Activated CD4-positive, alpha-beta memory T cell treated with anti-CD3 and anti-CD28 coated beads for 36 hours (primary cell): ENCODE measurements at regions of chr13 and their contacts with region 1.

Region 1: DNA sequence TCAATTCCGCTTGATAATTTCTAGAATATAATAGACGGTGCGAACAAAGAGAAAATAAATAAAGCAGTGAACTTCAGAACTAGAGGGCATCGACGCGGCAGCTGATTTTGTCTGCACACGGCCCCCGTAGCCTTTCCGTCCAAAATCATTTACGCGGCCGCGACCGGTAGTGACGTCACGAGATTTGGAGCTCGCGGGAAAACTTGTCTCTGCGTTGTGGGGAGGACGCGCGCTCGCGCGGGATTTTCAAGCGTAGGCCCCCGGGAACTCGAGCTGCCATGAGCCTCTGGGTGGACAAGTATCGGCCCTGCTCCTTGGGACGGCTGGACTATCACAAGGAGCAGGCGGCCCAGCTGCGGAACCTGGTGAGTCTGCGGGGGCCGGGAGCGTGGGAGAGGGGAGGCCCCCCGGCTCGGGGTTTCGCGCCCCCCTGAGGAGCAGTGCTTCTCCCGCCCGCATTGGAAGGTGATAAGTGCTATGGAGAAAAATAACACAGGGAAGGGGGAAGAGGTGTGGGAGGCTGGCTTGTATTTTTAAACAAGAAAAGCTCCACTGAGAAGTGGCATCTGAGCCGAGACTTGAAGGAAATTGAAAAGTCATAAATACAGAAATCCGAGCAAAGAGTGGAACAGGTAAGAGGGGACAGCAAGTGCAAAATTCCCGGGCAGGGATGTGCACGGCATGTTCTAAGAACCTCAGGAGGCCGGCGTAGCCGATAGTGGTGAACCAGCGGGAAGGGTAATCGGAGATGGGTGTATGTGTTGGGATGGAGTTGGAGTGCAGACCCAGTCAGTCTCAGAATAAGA is at the start of gene RFC3:
- DNase-seq: peak; percentile 96
- H3K4me3 Mint-ChIP-seq: peak within 1 kb of the TSS; percentile 99
- H3K27ac Mint-ChIP-seq: peak within 1 kb of the TSS; percentile 62
- H3K4me1 Mint-ChIP-seq: peaks cover 34% of the 10 kb centered on the region
- H3K27me3 Mint-ChIP-seq: peaks cover 4% of the 10 kb centered on the region
- total RNA-seq, gene RFC3: 52.4 to 53.9 TPM

Region 2: GRCh38 chr13:33367926-33368325 is 450.2 kb before region 1 on chr13:
- CTCF ChIA-PET with region 1: no interaction called
- POLR2A ChIA-PET with region 1: no interaction called
- intact Hi-C with region 1: no loop called
- DNase-seq: no peak
- H3K4me3 Mint-ChIP-seq: no peak overlapping the region
- H3K27ac Mint-ChIP-seq: no peak overlapping the region
- H3K4me1 Mint-ChIP-seq: peaks cover 5% of the 10 kb centered on the region
- H3K27me3 Mint-ChIP-seq: no peaks in the 10 kb centered on the region

Region 3: DNA sequence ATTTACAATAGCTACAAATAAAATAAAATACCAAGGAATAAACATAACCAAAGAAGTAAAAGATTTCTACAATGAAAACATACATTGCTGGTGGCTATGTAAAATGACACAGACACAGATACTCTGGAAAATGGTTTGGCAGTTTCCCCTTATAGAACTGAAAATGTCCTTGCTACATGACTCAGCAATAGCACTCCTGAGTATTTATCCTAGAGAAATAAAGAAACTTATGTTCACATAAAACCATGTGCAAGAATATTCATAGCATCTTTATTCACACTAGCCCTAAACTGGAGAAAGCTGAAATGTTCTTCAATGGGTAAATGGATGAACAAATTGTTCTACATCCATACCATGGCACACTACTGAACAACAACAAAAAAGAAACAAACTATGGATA is 100.3 kb before region 1 on chr13:
- CTCF ChIA-PET with region 1: no interaction called
- POLR2A ChIA-PET with region 1: no interaction called
- intact Hi-C with region 1: no loop called
- DNase-seq: no peak
- H3K4me3 Mint-ChIP-seq: no peak overlapping the region
- H3K27ac Mint-ChIP-seq: no peak overlapping the region
- H3K4me1 Mint-ChIP-seq: peaks cover 19% of the 10 kb centered on the region
- H3K27me3 Mint-ChIP-seq: no peaks in the 10 kb centered on the region

Region 4: GRCh38 chr13:33787051-33787591 is 31.0 kb before region 1 on chr13:
- CTCF ChIA-PET with region 1: no interaction called
- POLR2A ChIA-PET with region 1: no interaction called
- intact Hi-C with region 1: loop called (anchors 2 kb)
- DNase-seq: peak; percentile 10
- H3K4me3 Mint-ChIP-seq: peak overlapping the region; percentile 45
- H3K27ac Mint-ChIP-seq: no peak overlapping the region
- H3K4me1 Mint-ChIP-seq: peaks cover 14% of the 10 kb centered on the region
- H3K27me3 Mint-ChIP-seq: no peaks in the 10 kb centered on the region

Region 5: DNA sequence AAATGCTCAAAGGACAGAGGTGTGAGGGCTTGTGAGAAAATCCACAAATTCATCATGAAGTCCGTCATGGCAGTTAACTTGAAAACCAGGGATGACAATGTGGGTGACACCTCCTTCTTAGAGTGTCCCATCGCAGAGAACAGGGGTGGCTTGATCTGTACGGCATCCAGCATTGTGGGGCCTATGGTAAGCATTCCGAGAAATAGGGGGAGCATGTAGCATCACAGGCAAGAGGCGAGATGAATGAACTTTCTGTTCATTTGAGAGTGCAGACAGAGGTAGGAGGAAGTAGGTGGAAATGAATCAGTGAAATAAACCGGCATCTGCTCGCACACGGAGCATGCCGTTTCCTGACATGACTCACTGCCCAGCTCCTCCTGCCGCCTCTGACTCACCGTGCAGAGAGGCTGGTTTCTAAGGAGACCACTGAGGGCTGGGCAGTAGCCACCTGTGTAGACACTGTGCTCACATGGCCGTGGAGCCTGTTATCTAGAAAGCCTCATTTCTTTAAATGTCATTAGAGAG is 338.8 kb after region 1 on chr13:
- CTCF ChIA-PET with region 1: no interaction called
- POLR2A ChIA-PET with region 1: no interaction called
- intact Hi-C with region 1: loop called (anchors 1 kb)
- DNase-seq: peak; percentile 74
- H3K4me3 Mint-ChIP-seq: peak overlapping the region; percentile 28
- H3K27ac Mint-ChIP-seq: peak overlapping the region; percentile 10
- H3K4me1 Mint-ChIP-seq: peaks cover 14% of the 10 kb centered on the region
- H3K27me3 Mint-ChIP-seq: peaks cover 10% of the 10 kb centered on the region